Cardiac septum (tissue), 1 donor: ENCODE measurements at regions of chr16 and their contacts with region 1.

Region 1: DNA sequence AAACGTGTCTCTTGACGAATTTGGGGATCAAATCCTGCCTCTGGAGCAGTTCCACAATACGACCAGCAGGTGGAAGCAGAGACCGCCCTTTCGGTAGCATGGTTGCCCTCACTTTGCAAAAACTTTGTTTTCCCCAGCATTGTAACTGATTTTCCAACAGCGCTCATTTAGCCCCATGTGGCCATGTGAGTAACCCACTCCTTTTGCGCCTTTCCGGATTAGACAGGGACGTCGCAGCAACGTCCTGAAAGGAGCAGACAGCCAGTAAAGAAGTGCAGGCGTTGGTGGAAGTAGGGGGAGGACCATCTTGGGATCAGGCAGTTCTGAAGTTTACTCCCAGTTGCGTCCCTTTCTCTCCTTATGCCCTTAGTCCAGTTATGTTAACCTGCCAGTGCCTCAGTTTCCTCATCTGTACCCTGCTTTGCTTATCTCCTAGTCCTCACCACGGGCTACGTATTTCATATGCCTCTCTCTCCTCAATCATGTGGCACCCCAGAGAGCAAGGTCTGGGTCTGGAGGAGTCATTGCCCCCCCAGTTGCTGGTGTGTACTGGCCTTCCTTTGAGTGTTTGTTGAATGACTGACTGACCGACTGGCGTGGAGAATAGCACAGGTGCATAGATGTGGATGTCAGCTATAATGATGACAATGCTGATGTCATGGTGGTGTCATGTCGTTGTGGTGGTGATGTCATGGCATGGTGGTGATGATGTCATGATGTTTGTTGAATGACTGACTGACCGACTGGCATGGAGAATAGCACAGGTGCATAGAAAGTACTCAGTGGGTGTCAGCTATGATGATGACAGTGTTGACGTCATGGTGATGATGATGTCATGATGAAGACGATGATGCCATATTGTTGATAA is 22.3 kb downstream of the TMEM114 start:
- DNase-seq: peak; percentile 79

Region 2: GRCh38 chr16:8621572-8622314 is 53.8 kb after region 1 on chr16 and contains the start of gene METTL22:
- intact Hi-C with region 1: loop called (anchors 5 kb)
- DNase-seq: peak; percentile 96
- total RNA-seq, gene METTL22: 31.9 TPM